Panc1 (cell line): ENCODE measurements at regions of chr6 and their contacts with region 1.

Region 1: GRCh38 chr6:116016846-116017545 is 43.7 kb downstream of the FRK start:
- DNase-seq: no peak
- ATAC-seq: peak; percentile 52
- H3K4me3 ChIP-seq: peak overlapping the region in 1 of 2 experiments; percentile 1; a peak in 1 of 4 replicates
- H3K27ac ChIP-seq: no peak overlapping the region
- H3K4me1 ChIP-seq: no peaks in the 10 kb centered on the region
- H3K27me3 ChIP-seq: no peaks in the 10 kb centered on the region
- CTCF ChIP-seq: no peak

Region 2: GRCh38 chr6:116003668-116004067 is 13.3 kb before region 1 on chr6:
- CTCF ChIA-PET with region 1: no interaction called
- POLR2A ChIA-PET with region 1: interaction called, 10 read pairs
- in situ Hi-C with region 1: no loop called
- intact Hi-C with region 1: no loop called
- DNase-seq: no peak
- ATAC-seq: no peak
- H3K4me3 ChIP-seq: no peak overlapping the region
- H3K27ac ChIP-seq: no peak overlapping the region
- H3K4me1 ChIP-seq: no peaks in the 10 kb centered on the region
- H3K27me3 ChIP-seq: no peaks in the 10 kb centered on the region
- CTCF ChIP-seq: no peak

Region 3: DNA sequence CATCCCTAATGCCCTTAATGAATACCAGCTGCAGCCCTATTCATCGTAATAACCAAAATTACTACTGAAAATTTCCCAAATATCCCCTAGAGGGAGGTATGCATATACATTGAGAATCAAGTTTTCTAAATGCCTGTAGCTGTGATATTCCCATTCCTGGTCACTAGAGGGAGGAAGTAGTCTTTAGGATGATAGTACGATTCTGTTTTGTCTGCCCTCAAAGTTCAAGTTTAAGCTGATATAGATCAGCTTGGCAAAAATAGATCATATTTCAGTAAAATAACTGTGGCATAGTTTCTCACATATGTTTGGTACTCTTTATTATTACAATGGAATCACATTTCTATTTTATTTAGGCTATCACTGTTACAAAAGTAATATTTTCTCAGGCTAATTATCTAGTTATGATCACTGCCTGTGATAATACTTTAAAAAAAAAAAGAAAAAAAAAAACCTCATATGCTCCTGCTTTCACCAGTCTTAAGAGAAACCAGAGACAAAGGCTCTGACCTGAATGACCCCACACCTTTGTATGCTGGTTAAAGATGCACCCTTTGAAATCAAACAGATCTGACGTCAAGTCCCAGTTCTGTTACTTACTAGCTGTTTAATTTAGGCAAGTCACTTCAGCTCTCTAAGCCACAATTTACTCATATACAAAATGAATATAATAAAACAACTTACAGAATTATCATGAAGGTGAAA is 251.7 kb after region 1 on chr6:
- CTCF ChIA-PET with region 1: no interaction called
- POLR2A ChIA-PET with region 1: no interaction called
- in situ Hi-C with region 1: no loop called
- intact Hi-C with region 1: no loop called
- DNase-seq: peak; percentile 67
- ATAC-seq: peak; percentile 94
- H3K4me3 ChIP-seq: no peak overlapping the region
- H3K27ac ChIP-seq: no peak overlapping the region
- H3K4me1 ChIP-seq: no peaks in the 10 kb centered on the region
- H3K27me3 ChIP-seq: no peaks in the 10 kb centered on the region
- CTCF ChIP-seq: peak; percentile 93; the same call in 1 of the 2 replicates

Region 4: DNA sequence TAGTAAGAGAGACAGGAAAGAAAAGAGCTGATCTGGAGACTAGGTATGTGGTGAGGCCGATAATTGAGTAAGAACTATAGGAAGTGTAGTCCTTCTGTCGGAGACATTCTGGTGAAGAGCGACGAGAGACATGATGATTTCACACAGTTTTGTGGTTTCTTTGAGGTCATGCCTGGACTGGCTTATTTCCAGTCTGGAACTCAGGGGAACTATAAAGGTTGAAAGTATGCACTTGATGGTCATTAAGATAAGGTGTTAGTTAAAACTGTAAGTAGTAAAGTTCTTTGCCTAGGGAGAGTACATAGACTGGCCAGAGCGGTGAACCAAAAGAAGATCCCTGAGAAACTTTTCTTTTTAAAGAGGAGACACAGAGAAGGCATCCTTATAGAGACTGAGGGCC is 928.8 kb after region 1 on chr6:
- CTCF ChIA-PET with region 1: no interaction called
- POLR2A ChIA-PET with region 1: no interaction called
- in situ Hi-C with region 1: no loop called
- intact Hi-C with region 1: no loop called
- DNase-seq: no peak
- ATAC-seq: no peak
- H3K4me3 ChIP-seq: no peak overlapping the region
- H3K27ac ChIP-seq: no peak overlapping the region
- H3K4me1 ChIP-seq: no peaks in the 10 kb centered on the region
- H3K27me3 ChIP-seq: peaks cover 38% of the 10 kb centered on the region
- CTCF ChIP-seq: no peak